ENCODE measurements at regions of chr17 and their contacts with region 1.

Region 1: GRCh38 chr17:74961657-74962490 is 10.7 kb downstream of the HID1 start:
- DNase-seq: peak; percentile 93
- H3K4me3 ChIP-seq: no peak overlapping the region
- H3K27ac ChIP-seq: no peak overlapping the region
- H3K4me1 ChIP-seq: peaks cover 0 to 5% (median 2%) of the 10 kb centered on the region in 4 donors
- H3K27me3 ChIP-seq: no peaks in the 10 kb centered on the region
- CTCF ChIP-seq: peak; percentile 75 to 87 (median 81)
- EP300 ChIP-seq: no peak
- POLR2A ChIP-seq: no peak

Region 2: GRCh38 chr17:75012346-75013091 is 50.6 kb after region 1 on chr17 and contains the start of gene MRPL58:
- in situ Hi-C with region 1: no loop called
- intact Hi-C with region 1: loop called (anchors 10 kb)
- DNase-seq: peak; percentile 86
- H3K4me3 ChIP-seq: peak within 1 kb of the TSS; percentile 51 to 86 (median 82)
- H3K27ac ChIP-seq: peak within 1 kb of the TSS; percentile 88 to 96 (median 94)
- H3K4me1 ChIP-seq: peaks cover 21 to 42% (median 26%) of the 10 kb centered on the region in 4 donors
- H3K27me3 ChIP-seq: no peaks in the 10 kb centered on the region
- CTCF ChIP-seq: peak; percentile 51 to 84 (median 63)
- EP300 ChIP-seq: no peak
- POLR2A ChIP-seq: peak; percentile 57
- total RNA-seq, gene MRPL58: 1.00 to 41.3 (median 37.4) TPM in 3 of 4 donors, not detected in the other

Region 3: DNA sequence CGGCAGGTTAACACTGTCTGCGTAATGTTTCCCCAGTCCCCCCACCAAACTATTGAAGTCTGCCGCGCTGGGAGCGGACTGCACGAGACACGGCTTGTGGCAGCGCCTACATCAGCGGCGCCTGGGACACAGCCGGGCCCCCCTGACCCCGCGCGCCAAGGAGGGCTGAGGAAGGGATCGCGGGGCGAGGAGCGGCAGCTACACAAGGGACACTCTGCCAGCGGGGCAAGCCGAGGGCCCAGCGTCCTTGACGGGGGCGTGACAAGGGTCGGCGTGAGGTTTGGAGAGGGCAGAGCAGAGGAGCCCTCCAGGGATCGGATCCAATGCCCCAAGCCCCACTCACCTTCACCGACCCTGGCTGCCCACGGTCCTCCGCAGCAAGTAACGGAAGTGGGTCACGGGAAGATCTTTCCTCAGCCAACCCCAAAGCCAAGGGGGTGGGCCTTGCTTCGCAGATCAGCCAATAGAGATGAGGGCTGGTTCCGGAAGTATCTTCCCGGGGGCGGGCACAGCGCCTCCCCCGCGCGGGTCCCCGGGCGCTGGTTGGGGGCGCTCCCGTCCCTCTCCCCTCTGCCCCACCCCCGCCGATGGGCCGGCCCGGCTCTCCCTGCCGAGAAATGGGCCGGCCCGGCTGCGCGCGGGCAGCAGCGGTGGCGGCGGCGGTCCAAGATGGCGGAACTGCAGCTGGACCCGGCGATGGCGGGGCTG is 84.9 kb after region 1 on chr17 and contains the starts of genes ATP5PD and KCTD2:
- in situ Hi-C with region 1: no loop called
- intact Hi-C with region 1: no loop called
- DNase-seq: peak; percentile 97
- H3K4me3 ChIP-seq: peak within 1 kb of the TSS; percentile 66 to 98 (median 82)
- H3K27ac ChIP-seq: peak within 1 kb of the TSS; percentile 93 to 99 (median 98)
- H3K4me1 ChIP-seq: peaks cover 12 to 30% (median 23%) of the 10 kb centered on the region in 4 donors
- H3K27me3 ChIP-seq: no peaks in the 10 kb centered on the region
- CTCF ChIP-seq: no peak
- EP300 ChIP-seq: no peak
- POLR2A ChIP-seq: peak; percentile 97
- total RNA-seq, gene ATP5PD: 75.2 to 373 (median 245) TPM
- total RNA-seq, gene KCTD2: 14.5 to 24.7 (median 19.7) TPM

Region 4: GRCh38 chr17:75182569-75183450 is 220.9 kb after region 1 on chr17 and contains the start of gene SUMO2:
- in situ Hi-C with region 1: loop called in 1 of 4 experiments (anchors 25 kb)
- intact Hi-C with region 1: no loop called
- DNase-seq: peak; percentile 97
- H3K4me3 ChIP-seq: peak within 1 kb of the TSS; percentile 90 to 98 (median 95)
- H3K27ac ChIP-seq: peak within 1 kb of the TSS; percentile 99 to 100 (median 100)
- H3K4me1 ChIP-seq: peaks cover 8 to 33% (median 12%) of the 10 kb centered on the region in 4 donors
- H3K27me3 ChIP-seq: no peaks in the 10 kb centered on the region
- CTCF ChIP-seq: peak in 2 of 5 experiments; percentile 46 to 55
- EP300 ChIP-seq: no peak
- POLR2A ChIP-seq: peak; percentile 84
- total RNA-seq, gene SUMO2: 6.4 to 56.5 (median 47.9) TPM

Region 5: DNA sequence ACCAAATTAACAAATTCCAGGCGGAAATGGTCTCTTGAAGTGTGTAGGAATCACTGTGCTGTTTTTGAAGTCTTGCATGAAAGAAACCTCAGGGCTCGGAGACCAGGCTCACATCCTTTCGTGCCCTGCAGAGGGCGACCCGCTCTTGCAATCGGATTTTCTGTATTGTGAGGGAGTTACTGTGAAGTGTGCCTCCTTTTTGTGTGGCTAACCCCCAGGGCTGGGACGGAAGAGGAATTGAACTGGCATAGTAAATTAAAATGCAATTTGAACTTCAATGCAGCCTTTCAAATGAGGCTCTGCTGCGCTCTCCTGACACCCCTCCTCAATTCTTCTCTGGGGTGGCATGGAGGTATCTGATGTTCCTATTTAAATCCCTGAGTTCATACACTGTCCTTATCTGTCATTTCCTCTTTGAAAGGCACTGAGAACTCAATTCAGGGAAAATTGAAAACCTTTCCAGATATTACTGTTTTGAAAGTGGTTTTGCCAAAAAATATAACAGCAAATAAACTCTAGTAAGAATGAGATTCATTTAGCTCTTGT is 1854.8 kb after region 1 on chr17:
- in situ Hi-C with region 1: no loop called
- intact Hi-C with region 1: no loop called
- DNase-seq: peak; percentile 31
- H3K4me3 ChIP-seq: no peak overlapping the region
- H3K27ac ChIP-seq: no peak overlapping the region
- H3K4me1 ChIP-seq: no peaks in the 10 kb centered on the region
- H3K27me3 ChIP-seq: peaks cover 19% of the 10 kb centered on the region
- CTCF ChIP-seq: peak; percentile 14 to 31 (median 27)
- EP300 ChIP-seq: no peak
- POLR2A ChIP-seq: no peak

Measured in transverse colon (tissue), 4 donors.